Psoas muscle (tissue), 8 donors: ENCODE measurements at regions of chr18 and their contacts with region 1.

Region 1: GRCh38 chr18:36402765-36403396 is 105.4 kb downstream of the FHOD3 start:
- DNase-seq: peak; percentile 79 to 89
- ATAC-seq: peak; percentile 59 to 90 (median 77)
- H3K4me3 ChIP-seq: no peak overlapping the region
- H3K27ac ChIP-seq: peak overlapping the region; percentile 32
- H3K4me1 ChIP-seq: peaks cover 19% of the 10 kb centered on the region
- H3K27me3 ChIP-seq: no peaks in the 10 kb centered on the region
- CTCF ChIP-seq: no peak

Region 2: DNA sequence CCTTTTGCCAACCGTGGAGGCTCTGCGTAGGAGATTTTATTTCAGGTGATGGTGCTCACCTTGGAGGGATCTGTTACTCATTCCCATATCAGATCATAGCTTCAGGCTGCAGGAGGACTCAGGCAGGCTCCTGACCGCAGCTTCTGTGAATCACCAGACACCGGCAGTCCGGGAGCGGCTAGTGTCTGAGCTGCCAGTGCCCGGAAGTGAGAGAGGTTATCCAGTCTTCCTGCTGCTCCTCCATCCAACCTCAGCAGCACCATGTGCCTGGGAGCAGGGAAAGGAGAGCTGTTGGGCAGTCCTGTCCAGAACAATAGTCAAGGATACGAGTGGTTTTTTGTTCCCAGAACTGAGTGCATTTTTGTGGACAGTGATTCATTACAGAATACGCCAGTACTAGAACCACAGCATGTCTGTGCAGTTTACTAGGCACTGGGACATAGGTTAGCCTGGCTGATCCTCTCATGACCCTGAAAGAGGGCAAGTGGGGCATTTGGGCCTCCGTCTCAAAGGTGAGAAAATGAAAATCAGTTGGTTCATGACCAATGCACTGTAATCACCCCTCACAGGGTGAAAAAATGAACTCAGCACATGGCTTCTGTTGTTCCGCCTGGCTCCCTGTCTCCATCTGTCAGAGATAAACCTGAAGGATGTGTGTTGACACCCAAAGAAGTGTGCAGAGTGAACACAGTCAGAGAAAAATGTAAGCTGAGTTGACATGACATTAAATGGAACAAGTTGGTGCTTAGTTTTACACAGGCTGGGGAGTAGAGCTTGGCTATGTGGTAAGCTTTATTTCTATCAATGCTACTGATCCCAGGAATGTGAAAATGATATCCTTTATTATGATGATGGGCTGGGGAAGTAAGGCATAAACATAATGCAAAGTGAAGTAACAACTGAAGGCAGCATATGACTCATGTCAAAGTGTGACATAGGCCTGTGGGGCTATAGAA is 93.2 kb before region 1 on chr18:
- intact Hi-C with region 1: loop called in 1 of 2 experiments (anchors 10 kb)
- DNase-seq: peak; percentile 67 to 68
- ATAC-seq: peak; percentile 63 to 89 (median 78)
- H3K4me3 ChIP-seq: no peak overlapping the region
- H3K27ac ChIP-seq: peak overlapping the region; percentile 39
- H3K4me1 ChIP-seq: peaks cover 35% of the 10 kb centered on the region
- H3K27me3 ChIP-seq: no peaks in the 10 kb centered on the region
- CTCF ChIP-seq: no peak

Region 3: GRCh38 chr18:36352384-36352783 is 50.5 kb before region 1 on chr18:
- intact Hi-C with region 1: no loop called
- DNase-seq: no peak
- ATAC-seq: peak in 3 of 4 donors; percentile 26 to 45 (median 30)
- H3K4me3 ChIP-seq: no peak overlapping the region
- H3K27ac ChIP-seq: peak overlapping the region; percentile 42
- H3K4me1 ChIP-seq: peaks cover 29% of the 10 kb centered on the region
- H3K27me3 ChIP-seq: no peaks in the 10 kb centered on the region
- CTCF ChIP-seq: no peak

Region 4: DNA sequence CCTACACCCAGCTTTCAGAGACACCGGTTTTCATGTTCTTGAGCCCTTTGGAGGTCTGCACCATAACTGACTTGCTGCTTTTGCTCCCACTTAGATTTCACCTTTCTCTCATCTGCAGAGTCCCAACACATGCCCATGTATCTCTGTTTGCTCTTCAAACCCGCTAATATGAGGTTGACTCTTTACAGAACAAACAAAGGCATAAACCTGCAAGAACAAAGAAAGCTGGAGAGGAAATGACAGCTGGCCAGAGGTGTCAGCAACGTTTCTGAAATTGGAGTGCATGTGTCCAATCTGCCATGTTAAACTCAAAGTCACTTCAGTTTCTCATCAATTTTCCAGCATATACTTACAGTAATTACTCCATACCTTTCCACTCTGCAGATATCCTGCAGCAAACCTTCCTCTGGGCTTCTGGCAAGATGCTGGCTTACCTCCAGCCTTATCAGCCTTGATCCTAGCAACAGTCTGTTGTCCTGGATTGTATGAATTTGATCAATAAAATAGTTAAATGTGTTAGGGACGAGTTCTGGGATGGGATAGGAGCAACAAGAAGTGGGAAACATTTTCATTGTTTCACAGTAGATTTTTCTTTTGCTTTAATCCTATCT is 52.1 kb after region 1 on chr18:
- intact Hi-C with region 1: loop called in 1 of 2 experiments (anchors 5 kb)
- DNase-seq: no peak
- ATAC-seq: no peak
- H3K4me3 ChIP-seq: no peak overlapping the region
- H3K27ac ChIP-seq: no peak overlapping the region
- H3K4me1 ChIP-seq: peaks cover 23% of the 10 kb centered on the region
- H3K27me3 ChIP-seq: no peaks in the 10 kb centered on the region
- CTCF ChIP-seq: no peak